MCF 10A (cell line): ENCODE measurements at regions of chr13 and their contacts with region 1.

Region 1: GRCh38 chr13:51583875-51584730 is at the start of gene WDFY2:
- DNase-seq: peak; percentile 100
- H3K4me3 Mint-ChIP-seq: peak within 1 kb of the TSS; percentile 88
- H3K27ac Mint-ChIP-seq: peak within 1 kb of the TSS; percentile 85
- H3K4me1 Mint-ChIP-seq: peaks cover 41% of the 10 kb centered on the region
- H3K27me3 Mint-ChIP-seq: no peaks in the 10 kb centered on the region
- CTCF ChIP-seq: no peak
- total RNA-seq, gene WDFY2: 46.7 and 56.2 TPM in 2 replicates

Region 2: GRCh38 chr13:51523082-51523518 is 61.0 kb before region 1 on chr13:
- CTCF ChIA-PET with region 1: interaction called, 4 read pairs
- POLR2A ChIA-PET with region 1: interaction called, 19 read pairs
- intact Hi-C with region 1: loop called (anchors 1 kb)
- DNase-seq: peak; percentile 96
- H3K4me3 Mint-ChIP-seq: peak overlapping the region; percentile 25
- H3K27ac Mint-ChIP-seq: no peak overlapping the region
- H3K4me1 Mint-ChIP-seq: peaks cover 25% of the 10 kb centered on the region
- H3K27me3 Mint-ChIP-seq: no peaks in the 10 kb centered on the region
- CTCF ChIP-seq: no peak

Region 3: GRCh38 chr13:51625555-51626345 is 41.6 kb after region 1 on chr13:
- CTCF ChIA-PET with region 1: interaction called, 6 read pairs
- POLR2A ChIA-PET with region 1: interaction called, 31 read pairs
- intact Hi-C with region 1: no loop called
- DNase-seq: peak; percentile 83
- H3K4me3 Mint-ChIP-seq: no peak overlapping the region
- H3K27ac Mint-ChIP-seq: peak overlapping the region; percentile 63
- H3K4me1 Mint-ChIP-seq: peaks cover 54% of the 10 kb centered on the region
- H3K27me3 Mint-ChIP-seq: no peaks in the 10 kb centered on the region
- CTCF ChIP-seq: no peak

Region 4: DNA sequence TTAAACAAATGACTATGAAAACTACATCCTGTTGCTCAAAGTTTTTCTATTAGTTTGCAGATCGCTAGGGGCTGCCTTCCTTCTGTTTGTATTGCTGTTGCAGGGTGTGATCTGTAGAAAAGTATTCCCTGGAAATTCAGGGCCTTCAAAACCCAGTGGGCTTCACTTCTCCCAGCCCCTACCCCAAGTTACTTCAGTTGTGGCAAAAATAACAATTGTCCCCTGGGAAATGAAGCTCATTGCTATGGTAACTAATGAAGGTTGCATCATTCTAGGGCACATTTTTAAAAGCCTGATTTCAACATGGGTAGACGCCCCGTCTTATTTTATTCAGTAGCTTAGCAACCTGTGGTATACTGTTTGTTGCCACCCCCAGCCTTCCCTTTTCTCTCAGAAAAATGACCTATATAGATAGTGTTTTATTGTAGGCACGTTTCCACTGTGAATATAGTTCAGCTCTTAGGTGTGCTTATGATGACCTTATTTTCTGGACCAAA is 61.1 kb after region 1 on chr13:
- CTCF ChIA-PET with region 1: interaction called, 6 read pairs
- POLR2A ChIA-PET with region 1: interaction called, 14 read pairs
- intact Hi-C with region 1: loop called (anchors 1 kb)
- DNase-seq: peak; percentile 78
- H3K4me3 Mint-ChIP-seq: peak overlapping the region; percentile 52
- H3K27ac Mint-ChIP-seq: peak overlapping the region; percentile 95
- H3K4me1 Mint-ChIP-seq: peaks cover 39% of the 10 kb centered on the region
- H3K27me3 Mint-ChIP-seq: no peaks in the 10 kb centered on the region
- CTCF ChIP-seq: no peak

Region 5: GRCh38 chr13:51729866-51730546 is 145.9 kb after region 1 on chr13:
- CTCF ChIA-PET with region 1: interaction called, 4 read pairs
- POLR2A ChIA-PET with region 1: interaction called, 24 read pairs
- intact Hi-C with region 1: loop called (anchors 2 kb)
- DNase-seq: peak; percentile 75
- H3K4me3 Mint-ChIP-seq: no peak overlapping the region
- H3K27ac Mint-ChIP-seq: no peak overlapping the region
- H3K4me1 Mint-ChIP-seq: peaks cover 23% of the 10 kb centered on the region
- H3K27me3 Mint-ChIP-seq: no peaks in the 10 kb centered on the region
- CTCF ChIP-seq: no peak